ENCODE measurements at regions of chr3 and their contacts with region 1.

Region 1: GRCh38 chr3:141460097-141460704 is 26.6 kb upstream of the RASA2 start:
- DNase-seq: peak; percentile 93
- ATAC-seq: peak; percentile 100
- H3K4me3 Mint-ChIP-seq: no peak overlapping the region
- H3K27ac Mint-ChIP-seq: no peak overlapping the region
- H3K4me1 Mint-ChIP-seq: peaks cover 20% of the 10 kb centered on the region
- H3K27me3 Mint-ChIP-seq: no peaks in the 10 kb centered on the region

Region 2: DNA sequence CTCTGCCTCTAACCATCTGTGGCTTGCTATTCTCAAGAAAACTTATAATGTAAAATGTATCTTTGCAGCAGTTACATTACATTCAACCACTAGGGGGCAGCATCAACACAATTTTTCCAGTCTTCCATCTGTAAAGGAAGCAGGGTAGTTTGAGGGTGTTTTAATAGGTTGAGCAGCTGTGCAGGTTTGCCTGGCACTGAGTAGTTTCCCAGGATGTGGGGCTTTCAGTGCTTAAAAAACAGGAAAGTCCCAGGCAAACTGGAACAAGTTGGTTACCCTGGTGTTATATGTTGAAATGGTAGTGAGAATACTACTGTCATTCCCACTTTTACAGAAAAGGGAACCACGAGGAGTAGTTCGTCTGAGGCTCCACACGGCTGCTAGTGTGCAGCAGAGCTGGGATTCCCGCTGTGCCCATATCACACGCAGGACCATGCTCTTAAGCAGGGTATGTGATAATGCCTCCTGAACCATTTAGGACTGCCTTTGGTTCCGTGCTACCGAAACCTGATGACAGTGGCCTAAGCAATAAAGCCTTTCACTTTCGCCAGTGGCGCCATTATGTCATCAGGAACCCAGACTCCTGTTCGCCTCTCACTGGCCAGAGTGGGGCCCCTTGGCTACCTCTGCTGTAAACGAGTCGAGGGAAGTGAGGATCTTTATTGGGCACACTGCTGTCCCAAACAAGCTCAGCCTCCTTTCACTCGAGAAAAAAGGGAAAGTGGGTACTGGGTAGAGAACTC is 156.5 kb before region 1 on chr3:
- CTCF ChIA-PET with region 1: interaction called, 267 read pairs
- POLR2A ChIA-PET with region 1: no interaction called
- DNase-seq: peak; percentile 83
- ATAC-seq: peak; percentile 74
- H3K4me3 Mint-ChIP-seq: no peak overlapping the region
- H3K27ac Mint-ChIP-seq: no peak overlapping the region
- H3K4me1 Mint-ChIP-seq: peaks cover 53% of the 10 kb centered on the region
- H3K27me3 Mint-ChIP-seq: peaks cover 2% of the 10 kb centered on the region

Region 3: GRCh38 chr3:141397996-141398395 is 62.2 kb before region 1 on chr3:
- CTCF ChIA-PET with region 1: no interaction called
- POLR2A ChIA-PET with region 1: no interaction called
- DNase-seq: no peak
- ATAC-seq: no peak
- H3K4me3 Mint-ChIP-seq: no peak overlapping the region
- H3K27ac Mint-ChIP-seq: no peak overlapping the region
- H3K4me1 Mint-ChIP-seq: peaks cover 16% of the 10 kb centered on the region
- H3K27me3 Mint-ChIP-seq: no peaks in the 10 kb centered on the region

Region 4: DNA sequence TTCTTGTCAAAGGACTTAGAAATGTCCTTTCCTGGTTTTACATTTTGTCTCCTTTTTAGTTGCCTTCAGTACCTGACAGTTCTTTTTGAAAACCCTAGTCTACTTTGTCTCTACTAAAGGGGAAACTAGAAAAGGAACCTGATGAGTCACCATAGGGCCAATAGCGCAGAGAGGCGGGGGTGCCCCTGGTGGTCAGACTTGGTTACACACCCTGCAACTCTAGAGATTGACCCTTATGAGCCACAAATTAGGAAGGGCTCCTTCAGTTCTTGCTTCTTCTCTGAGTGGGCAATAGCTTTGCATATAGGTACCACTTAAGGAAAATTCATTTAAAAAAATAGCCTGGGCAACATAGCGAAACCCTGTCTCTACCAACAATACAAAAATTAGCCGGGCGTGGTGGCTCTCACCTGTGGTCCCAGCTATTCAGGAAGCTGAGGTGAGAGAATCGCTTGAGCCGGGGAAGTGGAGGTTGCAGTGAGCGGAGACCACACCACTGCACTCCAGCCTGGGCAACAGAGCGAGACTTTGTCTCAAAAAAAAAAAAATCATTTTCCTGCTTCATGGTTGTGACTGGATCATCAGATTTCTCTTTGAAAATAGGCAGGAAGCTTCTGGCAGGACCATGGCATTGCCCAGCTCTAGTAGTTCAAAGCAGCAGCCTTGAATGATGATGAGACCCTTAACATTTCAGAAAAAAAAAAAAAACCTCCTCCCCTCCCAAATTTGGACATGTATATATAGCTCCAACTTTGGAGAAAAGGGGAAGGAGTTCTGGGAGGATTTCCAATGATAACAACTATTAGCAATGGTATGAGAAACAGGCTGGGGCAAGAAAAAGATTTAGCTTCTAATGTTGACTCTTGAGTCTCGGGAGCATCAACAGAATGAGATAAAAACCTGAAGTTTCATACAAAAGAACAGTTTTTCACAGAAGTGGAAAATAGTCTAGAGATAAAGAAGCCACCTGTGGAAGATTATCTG is 18.5 kb before region 1 on chr3:
- CTCF ChIA-PET with region 1: interaction called, 109 read pairs
- POLR2A ChIA-PET with region 1: no interaction called
- DNase-seq: peak; percentile 87
- ATAC-seq: peak; percentile 99
- H3K4me3 Mint-ChIP-seq: peak overlapping the region; percentile 20
- H3K27ac Mint-ChIP-seq: peak overlapping the region; percentile 55
- H3K4me1 Mint-ChIP-seq: peaks cover 31% of the 10 kb centered on the region
- H3K27me3 Mint-ChIP-seq: no peaks in the 10 kb centered on the region

Region 5: GRCh38 chr3:141498598-141499223 is 38.5 kb after region 1 on chr3:
- CTCF ChIA-PET with region 1: interaction called, 11 read pairs
- POLR2A ChIA-PET with region 1: no interaction called
- DNase-seq: peak; percentile 96
- ATAC-seq: peak; percentile 85
- H3K4me3 Mint-ChIP-seq: peak overlapping the region; percentile 73
- H3K27ac Mint-ChIP-seq: peak overlapping the region; percentile 95
- H3K4me1 Mint-ChIP-seq: peaks cover 78% of the 10 kb centered on the region
- H3K27me3 Mint-ChIP-seq: no peaks in the 10 kb centered on the region

Region 6: GRCh38 chr3:141561426-141562034 is 101.3 kb after region 1 on chr3:
- CTCF ChIA-PET with region 1: interaction called, 147 read pairs
- POLR2A ChIA-PET with region 1: interaction called, 3 read pairs
- DNase-seq: peak; percentile 69
- ATAC-seq: peak; percentile 60
- H3K4me3 Mint-ChIP-seq: no peak overlapping the region
- H3K27ac Mint-ChIP-seq: no peak overlapping the region
- H3K4me1 Mint-ChIP-seq: peaks cover 22% of the 10 kb centered on the region
- H3K27me3 Mint-ChIP-seq: no peaks in the 10 kb centered on the region

Region 7: GRCh38 chr3:141644931-141645330 is 184.7 kb after region 1 on chr3:
- CTCF ChIA-PET with region 1: interaction called, 19 read pairs
- POLR2A ChIA-PET with region 1: no interaction called
- DNase-seq: peak; percentile 79
- ATAC-seq: peak; percentile 88
- H3K4me3 Mint-ChIP-seq: no peak overlapping the region
- H3K27ac Mint-ChIP-seq: no peak overlapping the region
- H3K4me1 Mint-ChIP-seq: peaks cover 3% of the 10 kb centered on the region
- H3K27me3 Mint-ChIP-seq: no peaks in the 10 kb centered on the region